BJ (cell line): ENCODE measurements at regions of chr2 and their contacts with region 1.

Region 1: DNA sequence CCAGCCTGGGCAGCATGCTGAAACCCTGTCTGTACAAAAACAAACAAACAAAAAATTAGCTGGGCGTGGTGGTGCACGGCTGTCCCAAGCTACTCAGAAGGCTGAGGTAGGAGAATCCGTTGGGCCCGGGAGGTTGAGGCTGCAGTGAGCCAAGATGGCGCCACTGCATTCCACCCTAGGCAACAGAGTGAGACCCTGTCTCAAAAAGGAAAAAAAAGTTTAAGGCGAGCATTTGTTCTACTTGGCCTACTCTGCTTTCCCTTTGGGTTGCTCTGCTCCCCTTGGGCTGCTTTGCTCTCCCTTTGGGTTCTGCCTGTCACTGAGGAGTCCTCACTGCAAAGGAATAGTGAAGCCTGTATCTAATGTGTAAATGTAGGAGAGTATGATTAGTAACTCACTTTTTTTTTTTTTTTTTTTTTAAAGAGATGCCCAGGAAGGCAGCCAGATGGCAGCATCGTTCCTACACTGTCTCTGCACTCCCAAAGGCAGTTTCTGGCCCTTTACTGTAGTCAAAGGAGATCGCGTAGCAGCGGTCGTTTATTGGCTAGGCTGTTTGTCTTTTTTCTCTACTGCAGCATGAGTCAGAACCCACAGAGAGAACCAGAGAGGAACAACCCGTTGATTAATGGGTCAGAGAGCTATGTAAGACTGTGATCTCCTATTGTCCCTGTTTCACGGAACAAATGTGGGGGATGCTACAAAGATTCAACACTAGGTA is 118.3 kb upstream of the CWC22 start:
- DNase-seq: peak; percentile 82
- H3K4me3 ChIP-seq: no peak overlapping the region
- H3K27me3 ChIP-seq: no peaks in the 10 kb centered on the region
- CTCF ChIP-seq: peak; percentile 77

Region 2: GRCh38 chr2:180980106-180980942 is 854.9 kb after region 1 on chr2 and contains the start of gene UBE2E3:
- CTCF ChIA-PET with region 1: interaction called, 23 read pairs
- POLR2A ChIA-PET with region 1: no interaction called
- DNase-seq: no peak
- H3K4me3 ChIP-seq: peak within 1 kb of the TSS; percentile 76
- H3K27me3 ChIP-seq: no peaks in the 10 kb centered on the region
- CTCF ChIP-seq: peak; percentile 77
- polyA plus RNA-seq, gene UBE2E3: 58.8 and 105 TPM in 2 replicates

Region 3: GRCh38 chr2:181058378-181059269 is 933.2 kb after region 1 on chr2:
- CTCF ChIA-PET with region 1: interaction called, 14 read pairs
- POLR2A ChIA-PET with region 1: no interaction called
- DNase-seq: no peak
- H3K4me3 ChIP-seq: no peak overlapping the region
- H3K27me3 ChIP-seq: no peaks in the 10 kb centered on the region
- CTCF ChIP-seq: peak; percentile 42

Region 4: DNA sequence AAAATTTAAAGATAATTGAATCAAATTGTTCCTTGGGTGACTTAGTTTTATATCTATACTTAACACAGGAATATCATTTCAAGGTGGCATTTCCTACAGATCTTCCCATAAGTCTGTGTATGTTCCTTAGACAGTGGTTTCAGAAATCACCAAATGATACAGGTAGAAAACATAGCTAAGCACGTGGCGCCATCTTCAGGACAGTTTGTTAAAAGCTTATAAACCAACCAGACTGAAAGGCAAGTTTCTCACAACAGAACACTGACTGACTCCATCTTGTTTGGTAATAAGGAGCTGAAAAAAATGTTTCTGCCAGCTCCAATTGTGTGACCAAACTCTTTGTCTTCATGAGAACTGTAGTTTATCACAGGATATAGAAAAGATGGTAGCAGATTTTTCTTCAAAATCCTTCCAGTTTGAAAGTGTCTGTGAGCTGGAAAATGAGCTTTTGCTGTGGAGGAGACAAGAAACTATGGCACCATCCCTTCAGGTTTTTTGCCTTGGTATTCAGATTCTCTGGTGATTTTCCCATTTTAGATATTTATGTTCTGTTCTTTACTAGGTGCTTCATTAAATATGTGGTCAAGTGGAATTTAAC is 1589.7 kb after region 1 on chr2:
- CTCF ChIA-PET with region 1: interaction called, 25 read pairs
- POLR2A ChIA-PET with region 1: no interaction called
- DNase-seq: peak; percentile 25
- H3K4me3 ChIP-seq: no peak overlapping the region
- H3K27me3 ChIP-seq: no peaks in the 10 kb centered on the region; the same call in 1 of the 2 replicates
- CTCF ChIP-seq: peak; percentile 65